Mammary epithelial cell (primary cell): ENCODE measurements at regions of chr6 and their contacts with region 1.

Region 1: GRCh38 chr6:90859612-90860011 is 272.7 kb upstream of the MAP3K7 start:
- DNase-seq: no peak
- H3K4me3 ChIP-seq: no peak overlapping the region
- H3K27ac ChIP-seq: no peak overlapping the region
- H3K4me1 ChIP-seq: peaks cover 14% of the 10 kb centered on the region
- H3K27me3 ChIP-seq: no peaks in the 10 kb centered on the region
- CTCF ChIP-seq: peak; percentile 30 to 49

Region 2: DNA sequence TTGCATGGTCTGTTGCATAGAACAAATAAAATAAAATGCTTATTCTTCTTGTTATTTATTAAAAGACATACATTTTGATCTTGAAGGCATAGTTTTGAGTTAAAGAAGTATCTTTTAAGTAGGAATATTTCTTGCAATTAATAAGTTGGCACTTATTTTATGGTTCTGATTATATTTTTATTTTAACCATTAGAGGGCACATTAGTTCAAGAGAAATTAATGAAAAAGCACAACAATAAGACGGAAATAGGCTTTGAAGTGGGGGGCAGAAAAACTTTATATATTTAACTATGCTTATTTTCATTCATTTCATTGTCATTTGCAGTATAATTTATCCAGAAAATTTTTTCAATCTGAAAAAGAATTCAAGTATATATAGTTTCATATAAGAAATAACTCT is 228.6 kb before region 1 on chr6:
- CTCF ChIA-PET with region 1: interaction called, 7 read pairs
- dilution Hi-C with region 1: no loop called
- in situ Hi-C with region 1: no loop called
- intact Hi-C with region 1: loop called (anchors 1 kb)
- DNase-seq: no peak
- H3K4me3 ChIP-seq: no peak overlapping the region
- H3K27ac ChIP-seq: no peak overlapping the region
- H3K4me1 ChIP-seq: no peaks in the 10 kb centered on the region
- H3K27me3 ChIP-seq: no peaks in the 10 kb centered on the region
- CTCF ChIP-seq: peak in 1 of 2 donors; percentile 26

Region 3: DNA sequence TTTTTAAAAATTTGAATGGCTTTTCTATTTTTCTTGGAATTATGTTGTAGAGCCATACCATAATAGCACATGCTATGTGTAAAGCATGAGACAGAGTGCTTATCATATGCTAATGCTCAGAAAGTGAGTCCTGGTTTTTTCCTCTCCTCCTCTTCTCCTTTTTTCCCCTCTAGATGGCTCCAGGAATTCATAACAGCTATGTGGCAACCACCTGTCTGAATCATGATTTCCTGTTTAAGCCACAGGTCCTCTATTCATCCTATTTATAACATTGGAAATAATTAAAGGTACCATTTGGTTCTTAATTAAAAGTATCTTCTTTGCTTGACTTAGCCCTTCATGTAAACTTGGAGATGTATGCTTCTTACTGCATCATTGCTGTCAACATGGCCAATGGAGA is 12.8 kb before region 1 on chr6:
- CTCF ChIA-PET with region 1: interaction called, 20 read pairs
- dilution Hi-C with region 1: no loop called
- in situ Hi-C with region 1: no loop called
- intact Hi-C with region 1: loop called (anchors 1 kb)
- DNase-seq: peak; percentile 78
- H3K4me3 ChIP-seq: no peak overlapping the region
- H3K27ac ChIP-seq: peak overlapping the region; percentile 92
- H3K4me1 ChIP-seq: peaks cover 34% of the 10 kb centered on the region
- H3K27me3 ChIP-seq: no peaks in the 10 kb centered on the region
- CTCF ChIP-seq: peak; percentile 17 to 65

Region 4: GRCh38 chr6:91081452-91082067 is 221.9 kb after region 1 on chr6:
- CTCF ChIA-PET with region 1: no interaction called
- dilution Hi-C with region 1: no loop called
- in situ Hi-C with region 1: no loop called
- intact Hi-C with region 1: loop called (anchors 1 kb)
- DNase-seq: peak; percentile 40
- H3K4me3 ChIP-seq: no peak overlapping the region
- H3K27ac ChIP-seq: no peak overlapping the region
- H3K4me1 ChIP-seq: no peaks in the 10 kb centered on the region
- H3K27me3 ChIP-seq: no peaks in the 10 kb centered on the region
- CTCF ChIP-seq: peak; percentile 64 to 72

Region 5: DNA sequence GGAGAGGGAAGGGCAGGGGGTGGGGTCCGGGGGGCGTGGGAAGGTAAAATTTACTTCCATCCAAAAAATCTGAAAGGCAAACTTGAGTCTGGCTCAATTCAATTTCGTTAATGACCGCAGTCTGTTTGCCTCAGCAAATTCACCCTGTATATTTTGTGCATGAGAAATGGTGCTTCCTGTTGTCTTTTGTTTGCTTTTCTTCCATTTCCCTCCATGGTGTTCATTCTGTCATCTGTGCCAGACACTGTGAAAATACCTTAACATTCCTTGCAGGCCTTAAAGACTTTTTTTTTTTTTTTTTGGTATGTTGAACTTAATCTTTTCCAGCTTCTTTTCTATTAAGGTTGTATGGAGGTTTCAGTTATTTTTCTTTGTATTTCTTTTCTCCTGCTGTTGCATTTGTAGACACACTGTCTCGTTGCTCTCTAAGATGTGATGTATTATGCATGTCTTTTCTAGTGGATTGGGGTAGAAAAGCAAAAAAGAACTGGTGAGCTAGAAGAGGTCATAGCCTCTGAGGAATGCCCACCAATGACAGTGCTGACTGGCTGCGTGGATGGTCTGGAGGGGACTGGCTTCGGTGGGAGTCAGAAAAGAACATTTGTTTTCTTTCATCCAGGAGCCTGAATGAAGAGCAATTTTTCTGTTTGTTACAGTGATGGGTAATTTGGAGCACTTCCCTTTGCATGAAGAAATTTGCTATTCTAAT is 312.3 kb after region 1 on chr6:
- CTCF ChIA-PET with region 1: no interaction called
- dilution Hi-C with region 1: no loop called
- in situ Hi-C with region 1: no loop called
- intact Hi-C with region 1: loop called (anchors 10 kb)
- DNase-seq: no peak
- H3K4me3 ChIP-seq: no peak overlapping the region
- H3K27ac ChIP-seq: no peak overlapping the region
- H3K4me1 ChIP-seq: no peaks in the 10 kb centered on the region
- H3K27me3 ChIP-seq: peaks cover 2% of the 10 kb centered on the region
- CTCF ChIP-seq: no peak